ENCODE measurements at regions of chr3 and their contacts with region 1.

Region 1: DNA sequence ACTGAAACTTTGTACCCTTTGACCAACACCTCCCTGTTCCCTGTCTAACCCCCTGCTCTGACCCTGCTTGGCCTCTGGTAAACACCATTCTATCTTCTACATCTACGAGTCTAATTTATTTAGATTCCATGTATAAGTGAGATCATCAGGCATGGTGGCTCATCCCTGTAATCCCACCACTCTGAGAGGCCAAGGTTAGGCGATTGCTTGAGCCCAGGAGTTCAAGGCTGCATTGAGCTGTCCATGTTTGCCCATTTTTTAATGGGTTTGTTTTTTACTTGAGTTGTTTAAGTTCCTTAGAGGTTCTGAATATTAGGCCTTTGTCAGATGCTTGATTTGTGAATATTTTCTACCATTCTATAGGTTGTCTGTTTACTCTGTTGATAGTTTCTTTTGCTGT is 16.9 kb downstream of the FBXW12 start:
- DNase-seq: peak; percentile 86
- H3K4me3 ChIP-seq: no peak overlapping the region
- H3K27ac ChIP-seq: no peak overlapping the region
- H3K4me1 ChIP-seq: no peaks in the 10 kb centered on the region
- H3K27me3 ChIP-seq: peaks cover 0 to 7% (median 0%) of the 10 kb centered on the region in 4 donors
- CTCF ChIP-seq: no peak
- EP300 ChIP-seq: no peak
- POLR2A ChIP-seq: no peak

Region 2: DNA sequence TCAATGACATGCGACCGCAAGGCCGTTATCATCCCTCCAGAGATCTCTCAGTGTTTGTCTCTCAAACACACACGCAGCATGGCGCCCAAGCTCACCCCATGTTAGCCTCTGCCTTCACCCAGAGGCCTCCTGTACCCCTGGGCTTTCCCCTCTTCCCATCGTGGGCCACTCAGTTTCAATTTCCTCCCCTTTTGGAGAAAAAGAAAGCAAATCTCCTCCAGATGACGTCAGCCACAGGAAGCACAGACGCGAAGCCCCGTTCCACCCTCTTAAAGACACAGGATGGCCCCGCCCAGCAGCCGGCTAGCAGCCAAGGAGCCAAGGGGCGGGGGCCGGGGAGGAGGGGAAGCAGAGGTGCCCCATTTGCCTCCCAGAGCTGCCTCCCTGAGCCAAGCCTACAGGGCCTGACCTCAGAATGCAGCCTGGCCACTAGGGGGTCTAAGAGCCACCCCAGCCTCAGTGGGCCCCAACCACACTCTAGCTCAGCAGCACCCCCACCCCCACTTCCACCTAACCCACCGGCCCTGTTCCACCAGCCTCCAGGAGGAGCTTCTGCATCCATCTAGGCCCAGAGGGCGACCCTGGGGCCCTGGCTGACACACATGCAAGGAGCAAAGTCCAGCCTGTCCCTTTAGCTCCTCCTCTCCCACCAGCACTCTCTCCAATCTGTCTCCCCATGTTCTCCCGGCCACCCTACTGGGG is 84.1 kb after region 1 on chr3:
- intact Hi-C with region 1: no loop called
- DNase-seq: peak; percentile 98
- H3K4me3 ChIP-seq: peak overlapping the region; percentile 59 to 83 (median 70)
- H3K27ac ChIP-seq: peak overlapping the region; percentile 89 to 97 (median 94)
- H3K4me1 ChIP-seq: peaks cover 51 to 53% (median 52%) of the 10 kb centered on the region in 4 donors
- H3K27me3 ChIP-seq: no peaks in the 10 kb centered on the region
- CTCF ChIP-seq: peak in 2 of 3 experiments; percentile 37 to 46
- EP300 ChIP-seq: no peak
- POLR2A ChIP-seq: peak; percentile 33

Region 3: DNA sequence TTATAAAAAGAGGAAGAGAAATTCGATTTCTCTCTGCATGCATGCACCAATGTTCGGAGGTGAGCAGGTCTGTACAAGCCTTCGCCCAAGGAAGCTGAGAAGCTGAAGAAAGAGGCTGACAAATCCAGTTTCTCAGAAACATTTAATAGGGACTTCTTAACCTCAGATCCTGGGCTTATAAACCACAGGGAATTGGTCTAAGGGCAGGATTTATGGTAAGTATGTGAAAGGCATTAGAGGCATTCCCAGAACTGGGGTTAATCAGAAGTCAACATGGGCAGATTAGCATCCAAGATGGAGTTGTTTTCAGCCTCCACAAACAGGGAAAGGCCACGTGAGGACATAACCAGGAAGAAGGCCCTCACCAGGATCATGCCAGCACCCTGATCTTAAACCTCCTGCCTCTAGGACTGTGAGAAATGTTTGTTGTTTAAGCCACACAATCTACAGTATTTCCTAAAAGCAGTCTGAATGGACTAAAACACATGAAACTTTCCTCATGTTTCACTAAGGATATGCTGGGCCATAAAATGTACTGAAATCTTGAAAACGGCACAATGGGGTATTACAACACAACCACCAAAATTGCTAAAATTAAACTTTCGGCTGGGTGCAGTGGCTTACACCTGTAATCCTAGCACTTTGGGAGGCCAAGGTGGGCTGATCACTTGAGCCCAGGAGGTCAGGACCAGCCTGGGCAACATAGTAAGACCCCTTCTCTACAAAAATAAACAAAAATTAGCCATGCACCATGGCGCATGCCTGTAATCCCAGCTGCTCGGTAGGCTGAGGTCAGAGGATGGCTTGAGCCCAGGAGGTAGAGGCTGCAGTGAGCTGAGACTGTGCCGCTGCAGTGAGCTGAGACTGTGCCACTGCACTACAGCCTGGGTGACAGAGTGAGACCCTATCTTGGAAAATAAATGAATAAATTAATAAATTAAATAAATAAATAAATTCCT is 103.9 kb after region 1 on chr3:
- intact Hi-C with region 1: no loop called
- DNase-seq: no peak
- H3K4me3 ChIP-seq: no peak overlapping the region
- H3K27ac ChIP-seq: no peak overlapping the region
- H3K4me1 ChIP-seq: no peaks in the 10 kb centered on the region
- H3K27me3 ChIP-seq: no peaks in the 10 kb centered on the region
- CTCF ChIP-seq: no peak
- EP300 ChIP-seq: no peak
- POLR2A ChIP-seq: no peak

Region 4: DNA sequence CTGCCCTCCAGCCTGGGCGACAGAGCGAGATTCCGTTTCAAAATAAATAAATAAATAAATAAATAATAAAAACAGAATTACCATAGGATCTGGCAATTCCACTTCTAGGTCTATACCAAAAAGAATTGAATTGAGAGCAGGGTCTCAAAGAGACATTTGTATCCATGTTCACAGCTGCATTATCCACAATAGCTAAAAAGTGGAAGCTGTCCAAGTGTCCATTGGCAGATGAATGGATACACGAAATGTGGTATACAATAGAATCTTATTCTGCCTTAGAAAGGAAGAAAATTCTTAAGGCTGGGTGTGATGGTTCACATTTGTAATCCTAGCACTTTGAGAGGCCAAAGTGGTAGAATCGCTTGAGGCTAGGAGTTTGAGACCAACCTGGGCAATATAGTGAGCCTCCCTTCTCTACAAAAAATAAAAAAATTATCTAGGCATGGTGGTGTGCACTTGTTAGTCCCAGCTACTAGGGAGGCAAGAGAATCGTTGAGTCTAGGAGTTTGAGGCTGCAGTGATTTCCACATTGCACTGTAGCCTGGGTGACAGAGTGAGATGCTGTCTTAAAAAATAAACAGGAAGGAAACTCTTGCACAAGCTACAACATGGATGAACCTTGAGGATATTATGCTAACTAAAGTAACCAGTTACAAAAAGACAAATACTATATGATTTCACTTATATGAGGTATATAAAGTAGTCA is 143.5 kb after region 1 on chr3:
- intact Hi-C with region 1: loop called (anchors 10 kb)
- DNase-seq: no peak
- H3K4me3 ChIP-seq: no peak overlapping the region
- H3K27ac ChIP-seq: no peak overlapping the region
- H3K4me1 ChIP-seq: no peaks in the 10 kb centered on the region
- H3K27me3 ChIP-seq: no peaks in the 10 kb centered on the region
- CTCF ChIP-seq: no peak
- EP300 ChIP-seq: no peak
- POLR2A ChIP-seq: no peak

Measured in esophagus muscularis mucosa (tissue), 4 donors.